Ovary (tissue), 10 donors: ENCODE measurements at regions of chr9 and their contacts with region 1.

Region 1: GRCh38 chr9:127503947-127504782 is 52.9 kb downstream of the LRSAM1 start:
- DNase-seq: peak; percentile 83 to 92 (median 89)
- H3K4me3 ChIP-seq: no peak overlapping the region
- H3K27ac ChIP-seq: peak overlapping the region in 1 of 2 donors; percentile 29
- H3K4me1 ChIP-seq: peaks cover 2% of the 10 kb centered on the region
- H3K27me3 ChIP-seq: no peaks in the 10 kb centered on the region
- CTCF ChIP-seq: peak; percentile 87 to 94 (median 92)
- EP300 ChIP-seq: no peak
- POLR2A ChIP-seq: no peak

Region 2: GRCh38 chr9:127723450-127723849 is 219.3 kb after region 1 on chr9:
- intact Hi-C with region 1: loop called in 2 of 4 experiments (anchors 5 to 10 kb)
- DNase-seq: no peak
- H3K4me3 ChIP-seq: no peak overlapping the region
- H3K27ac ChIP-seq: no peak overlapping the region
- H3K4me1 ChIP-seq: peaks cover 3% of the 10 kb centered on the region
- H3K27me3 ChIP-seq: no peaks in the 10 kb centered on the region
- CTCF ChIP-seq: no peak
- EP300 ChIP-seq: no peak
- POLR2A ChIP-seq: no peak

Region 3: GRCh38 chr9:127742435-127743088 is 238.4 kb after region 1 on chr9:
- intact Hi-C with region 1: loop called in 1 of 4 experiments (anchors 10 kb)
- DNase-seq: peak; percentile 66 to 82 (median 77)
- H3K4me3 ChIP-seq: peak overlapping the region; percentile 4
- H3K27ac ChIP-seq: no peak overlapping the region
- H3K4me1 ChIP-seq: peaks cover 2% of the 10 kb centered on the region
- H3K27me3 ChIP-seq: no peaks in the 10 kb centered on the region
- CTCF ChIP-seq: no peak
- EP300 ChIP-seq: no peak
- POLR2A ChIP-seq: no peak